ENCODE measurements at regions of chr7 and their contacts with region 1.

Region 1: DNA sequence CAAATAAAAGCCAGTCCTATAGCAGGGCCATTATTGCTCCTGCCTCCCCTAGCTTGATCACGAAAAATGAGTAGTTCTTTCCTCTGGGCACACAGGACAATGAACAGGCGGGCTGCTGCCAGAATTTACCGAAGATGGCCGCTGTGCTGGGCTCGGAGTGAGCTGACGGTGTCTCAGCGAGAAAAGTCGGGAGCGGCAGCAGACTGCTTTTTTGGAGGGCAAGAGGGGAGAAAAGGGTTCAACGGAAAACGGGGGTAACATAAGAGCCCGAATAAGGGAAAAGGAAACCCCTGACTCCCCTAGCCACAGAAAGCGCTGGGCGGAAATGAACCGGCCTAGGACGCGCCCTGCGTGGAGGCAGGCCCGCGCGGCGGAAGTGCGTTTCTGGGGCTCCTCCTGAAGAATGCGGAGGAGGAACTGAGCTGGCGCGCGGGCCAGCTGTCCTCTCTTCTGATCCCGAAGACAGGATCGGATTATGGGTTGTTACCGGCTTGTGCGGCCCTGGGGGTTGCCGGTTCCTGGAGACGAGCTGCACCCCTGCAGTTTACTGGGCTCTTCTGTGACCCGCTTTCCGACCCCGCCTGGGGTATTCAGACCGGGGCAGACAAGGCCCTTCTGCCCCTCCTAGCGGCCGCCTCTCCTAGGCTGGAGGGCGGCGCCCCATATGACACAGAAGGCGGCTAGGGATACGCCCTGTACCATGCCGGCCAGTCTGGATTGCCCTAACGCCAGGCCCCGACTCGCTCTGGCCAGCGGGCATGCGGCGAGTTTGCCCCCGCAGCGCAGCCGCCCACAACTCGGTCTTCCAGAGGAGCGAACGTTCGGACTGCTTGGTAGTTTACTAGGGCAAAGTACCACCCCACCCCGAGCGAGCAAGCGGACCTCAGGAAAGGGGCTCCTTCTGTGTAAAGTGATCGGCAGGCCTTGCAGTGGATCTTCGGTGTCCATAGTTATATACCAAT is 30.1 kb upstream of the KMT2E start:
- DNase-seq: peak; percentile 42
- ATAC-seq: peak; percentile 96
- H3K4me3 ChIP-seq: peak overlapping the region; percentile 75
- H3K27ac ChIP-seq: peak overlapping the region; percentile 98
- H3K4me1 ChIP-seq: peaks cover 14% of the 10 kb centered on the region; the same call in 1 of the 2 replicates
- H3K27me3 ChIP-seq: no peaks in the 10 kb centered on the region
- CTCF ChIP-seq: peak; percentile 36 to 61 (median 50); a peak in 5 of 6 replicates
- EP300 ChIP-seq: 0 out of 4 replicates have a peak, but pooled peaks of 1 of the 2 experiments have one; percentile 24
- POLR2A ChIP-seq: peak; percentile 90
- RAD21 ChIP-seq: peak; percentile 37; the same call in 1 of the 2 replicates

Region 2: GRCh38 chr7:104862719-104863118 is 121.1 kb before region 1 on chr7:
- CTCF ChIA-PET with region 1: no interaction called
- POLR2A ChIA-PET with region 1: no interaction called
- RAD21 ChIA-PET with region 1: no interaction called
- SMC1A ChIA-PET with region 1: no interaction called
- in situ Hi-C with region 1: no loop called
- intact Hi-C with region 1: no loop called
- DNase-seq: no peak
- ATAC-seq: no peak; the same call in 2 of the 3 replicates
- H3K4me3 ChIP-seq: no peak overlapping the region
- H3K27ac ChIP-seq: no peak overlapping the region
- H3K4me1 ChIP-seq: peaks cover 8% of the 10 kb centered on the region
- H3K27me3 ChIP-seq: no peaks in the 10 kb centered on the region
- CTCF ChIP-seq: no peak
- EP300 ChIP-seq: no peak
- POLR2A ChIP-seq: no peak
- RAD21 ChIP-seq: no peak

Region 3: GRCh38 chr7:104931181-104931781 is 52.6 kb before region 1 on chr7:
- CTCF ChIA-PET with region 1: interaction called, 200 read pairs
- POLR2A ChIA-PET with region 1: interaction called, 5 read pairs
- RAD21 ChIA-PET with region 1: interaction called, 147 read pairs
- SMC1A ChIA-PET with region 1: interaction called, 104 read pairs
- in situ Hi-C with region 1: no loop called
- intact Hi-C with region 1: no loop called
- DNase-seq: no peak
- ATAC-seq: no peak
- H3K4me3 ChIP-seq: no peak overlapping the region
- H3K27ac ChIP-seq: no peak overlapping the region
- H3K4me1 ChIP-seq: no peaks in the 10 kb centered on the region
- H3K27me3 ChIP-seq: no peaks in the 10 kb centered on the region
- CTCF ChIP-seq: no peak
- EP300 ChIP-seq: no peak
- POLR2A ChIP-seq: no peak
- RAD21 ChIP-seq: no peak

Region 4: GRCh38 chr7:105003275-105003674 is 19.4 kb after region 1 on chr7:
- CTCF ChIA-PET with region 1: interaction called, 16 read pairs
- POLR2A ChIA-PET with region 1: interaction called, 17 read pairs
- RAD21 ChIA-PET with region 1: interaction called, 112 read pairs
- SMC1A ChIA-PET with region 1: interaction called, 270 read pairs
- in situ Hi-C with region 1: no loop called
- intact Hi-C with region 1: no loop called
- DNase-seq: no peak
- ATAC-seq: peak; percentile 54
- H3K4me3 ChIP-seq: 0 out of 2 replicates have a peak overlapping the region, but pooled peaks have one; percentile 9
- H3K27ac ChIP-seq: no peak overlapping the region
- H3K4me1 ChIP-seq: peaks cover 10% of the 10 kb centered on the region; the same call in 1 of the 2 replicates
- H3K27me3 ChIP-seq: no peaks in the 10 kb centered on the region
- CTCF ChIP-seq: no peak
- EP300 ChIP-seq: no peak
- POLR2A ChIP-seq: no peak
- RAD21 ChIP-seq: no peak

Region 5: GRCh38 chr7:105046414-105046813 is 62.6 kb after region 1 on chr7:
- CTCF ChIA-PET with region 1: interaction called, 97 read pairs
- POLR2A ChIA-PET with region 1: interaction called, 3 read pairs
- RAD21 ChIA-PET with region 1: interaction called, 42 read pairs
- SMC1A ChIA-PET with region 1: interaction called, 119 read pairs
- in situ Hi-C with region 1: no loop called
- intact Hi-C with region 1: loop called (anchors 1 kb)
- DNase-seq: no peak
- ATAC-seq: no peak
- H3K4me3 ChIP-seq: no peak overlapping the region
- H3K27ac ChIP-seq: no peak overlapping the region
- H3K4me1 ChIP-seq: no peaks in the 10 kb centered on the region
- H3K27me3 ChIP-seq: no peaks in the 10 kb centered on the region
- CTCF ChIP-seq: no peak
- EP300 ChIP-seq: no peak
- POLR2A ChIP-seq: no peak
- RAD21 ChIP-seq: no peak

Region 6: GRCh38 chr7:105112440-105113418 is 128.9 kb after region 1 on chr7:
- CTCF ChIA-PET with region 1: interaction called, 10 read pairs
- POLR2A ChIA-PET with region 1: interaction called, 3 read pairs
- RAD21 ChIA-PET with region 1: interaction called, 8 read pairs
- SMC1A ChIA-PET with region 1: interaction called, 17 read pairs
- in situ Hi-C with region 1: no loop called
- intact Hi-C with region 1: no loop called
- DNase-seq: no peak
- ATAC-seq: peak; percentile 24
- H3K4me3 ChIP-seq: no peak overlapping the region
- H3K27ac ChIP-seq: no peak overlapping the region
- H3K4me1 ChIP-seq: no peaks in the 10 kb centered on the region
- H3K27me3 ChIP-seq: no peaks in the 10 kb centered on the region
- CTCF ChIP-seq: no peak
- EP300 ChIP-seq: no peak
- POLR2A ChIP-seq: peak; percentile 28; the same call in 1 of the 2 replicates
- RAD21 ChIP-seq: no peak

Region 7: GRCh38 chr7:105330526-105330925 is 346.7 kb after region 1 on chr7:
- CTCF ChIA-PET with region 1: interaction called, 13 read pairs
- POLR2A ChIA-PET with region 1: no interaction called
- RAD21 ChIA-PET with region 1: interaction called, 5 read pairs
- SMC1A ChIA-PET with region 1: interaction called, 3 read pairs
- in situ Hi-C with region 1: no loop called
- intact Hi-C with region 1: no loop called
- DNase-seq: no peak
- ATAC-seq: peak; percentile 65
- H3K4me3 ChIP-seq: no peak overlapping the region
- H3K27ac ChIP-seq: no peak overlapping the region
- H3K4me1 ChIP-seq: peaks cover 9% of the 10 kb centered on the region
- H3K27me3 ChIP-seq: no peaks in the 10 kb centered on the region
- CTCF ChIP-seq: no peak
- EP300 ChIP-seq: no peak
- POLR2A ChIP-seq: no peak
- RAD21 ChIP-seq: no peak

Measured in GM12878 (cell line).